CD4-positive, alpha-beta T cell (primary cell): ENCODE measurements at regions of chr3 and their contacts with region 1.

Region 1: GRCh38 chr3:14402304-14402811 is at the start of gene SLC6A6:
- DNase-seq: peak; percentile 88 to 99 (median 95)
- ATAC-seq: peak; percentile 81
- H3K4me3 ChIP-seq: peak within 1 kb of the TSS; percentile 67
- H3K4me3 Mint-ChIP-seq: peak within 1 kb of the TSS; percentile 96
- H3K27ac ChIP-seq: peak within 1 kb of the TSS; percentile 62 to 82
- H3K27ac Mint-ChIP-seq: peak within 1 kb of the TSS; percentile 90
- H3K4me1 ChIP-seq: peaks cover 52% of the 10 kb centered on the region
- H3K4me1 Mint-ChIP-seq: peaks cover 55% of the 10 kb centered on the region
- H3K27me3 ChIP-seq: no peaks in the 10 kb centered on the region
- H3K27me3 Mint-ChIP-seq: no peaks in the 10 kb centered on the region
- CTCF ChIP-seq: peak; percentile 59
- total RNA-seq, gene SLC6A6: 27.8 to 31.2 TPM

Region 2: GRCh38 chr3:13648060-13649001 is 754.0 kb before region 1 on chr3:
- CTCF ChIA-PET with region 1: no interaction called
- POLR2A ChIA-PET with region 1: no interaction called
- intact Hi-C with region 1: loop called in 1 of 2 experiments (anchors 10 kb)
- DNase-seq: peak; percentile 54 to 88 (median 73)
- ATAC-seq: peak; percentile 38
- H3K4me3 ChIP-seq: no peak overlapping the region
- H3K4me3 Mint-ChIP-seq: no peak overlapping the region
- H3K27ac ChIP-seq: no peak overlapping the region
- H3K27ac Mint-ChIP-seq: no peak overlapping the region
- H3K4me1 ChIP-seq: peaks cover 46% of the 10 kb centered on the region
- H3K4me1 Mint-ChIP-seq: peaks cover 51% of the 10 kb centered on the region
- H3K27me3 ChIP-seq: peaks cover 10 to 12% of the 10 kb centered on the region in 2 experiments
- H3K27me3 Mint-ChIP-seq: peaks cover 34% of the 10 kb centered on the region
- CTCF ChIP-seq: peak; percentile 95

Region 3: DNA sequence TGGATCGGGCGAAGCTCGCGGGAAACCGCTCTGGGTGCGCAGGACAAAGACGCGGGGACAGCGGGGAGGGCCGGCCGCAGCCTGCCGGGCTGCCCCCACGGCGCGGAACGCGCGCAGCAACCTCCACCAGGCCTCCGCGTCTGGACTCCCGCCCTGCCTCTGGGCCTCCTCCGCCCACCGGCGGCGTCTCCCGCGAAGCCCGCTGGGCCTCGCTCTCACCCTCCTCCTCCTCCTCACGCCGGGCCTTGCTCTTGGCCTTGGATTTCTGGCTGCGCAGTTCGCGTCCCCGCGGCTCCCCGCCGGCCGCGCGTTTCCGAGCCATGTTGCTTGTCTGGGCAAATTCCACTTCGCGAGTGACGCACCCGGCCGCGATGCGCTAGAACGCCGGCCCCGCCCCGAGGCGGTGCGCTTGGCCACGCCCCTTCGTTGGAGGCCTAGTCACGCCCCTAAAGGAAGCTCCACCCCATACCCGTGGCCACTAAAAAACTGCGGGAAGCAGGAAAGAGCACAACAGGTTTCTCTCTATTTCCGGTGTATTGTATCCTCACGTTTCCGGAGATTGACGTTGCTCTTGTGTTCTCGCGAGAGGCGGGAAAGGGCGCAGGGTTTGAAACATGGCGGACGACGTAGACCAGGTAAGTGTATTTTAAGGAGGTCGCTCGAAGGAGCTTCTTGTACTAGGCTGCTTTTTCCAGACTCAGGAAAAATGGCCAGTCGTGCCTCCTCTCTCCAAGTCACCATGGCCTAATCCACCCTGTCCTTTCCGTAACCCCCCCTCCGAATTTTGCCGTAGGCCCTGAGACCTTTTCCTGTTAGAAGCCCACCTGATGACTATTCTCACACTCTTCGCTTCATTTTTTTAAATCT is 223.9 kb before region 1 on chr3 and contains the starts of genes LSM3 and XPC:
- CTCF ChIA-PET with region 1: no interaction called
- POLR2A ChIA-PET with region 1: interaction called, 7 read pairs
- intact Hi-C with region 1: loop called (anchors 5 kb)
- DNase-seq: peak; percentile 96 to 99 (median 98)
- ATAC-seq: peak; percentile 88
- H3K4me3 ChIP-seq: peak within 1 kb of the TSS; percentile 79
- H3K4me3 Mint-ChIP-seq: peak within 1 kb of the TSS; percentile 98
- H3K27ac ChIP-seq: peak within 1 kb of the TSS; percentile 94 to 97
- H3K27ac Mint-ChIP-seq: peak within 1 kb of the TSS; percentile 93
- H3K4me1 ChIP-seq: peaks cover 43% of the 10 kb centered on the region
- H3K4me1 Mint-ChIP-seq: peaks cover 76% of the 10 kb centered on the region
- H3K27me3 ChIP-seq: no peaks in the 10 kb centered on the region
- H3K27me3 Mint-ChIP-seq: no peaks in the 10 kb centered on the region
- CTCF ChIP-seq: no peak
- total RNA-seq, gene LSM3: 6.5 to 6.9 TPM
- total RNA-seq, gene XPC: 59.2 to 65.1 TPM

Region 4: GRCh38 chr3:14426063-14426620 is 23.8 kb after region 1 on chr3:
- CTCF ChIA-PET with region 1: interaction called, 42 read pairs
- POLR2A ChIA-PET with region 1: interaction called, 107 read pairs
- intact Hi-C with region 1: loop called in 1 of 2 experiments (anchors 1 kb)
- DNase-seq: peak in 13 of 14 experiments; percentile 25 to 88 (median 43)
- ATAC-seq: peak; percentile 60
- H3K4me3 ChIP-seq: peak overlapping the region; percentile 21
- H3K4me3 Mint-ChIP-seq: peak overlapping the region; percentile 52
- H3K27ac ChIP-seq: peak overlapping the region; percentile 55 to 73
- H3K27ac Mint-ChIP-seq: peak overlapping the region; percentile 98
- H3K4me1 ChIP-seq: peaks cover 96% of the 10 kb centered on the region
- H3K4me1 Mint-ChIP-seq: peaks cover 93% of the 10 kb centered on the region
- H3K27me3 ChIP-seq: no peaks in the 10 kb centered on the region
- H3K27me3 Mint-ChIP-seq: no peaks in the 10 kb centered on the region
- CTCF ChIP-seq: peak; percentile 16

Region 5: GRCh38 chr3:14467814-14468620 is 65.7 kb after region 1 on chr3:
- CTCF ChIA-PET with region 1: interaction called, 30 read pairs
- POLR2A ChIA-PET with region 1: interaction called, 8 read pairs
- intact Hi-C with region 1: loop called (anchors 1 kb)
- DNase-seq: peak; percentile 24 to 72 (median 40)
- ATAC-seq: peak; percentile 79
- H3K4me3 ChIP-seq: no peak overlapping the region
- H3K4me3 Mint-ChIP-seq: no peak overlapping the region
- H3K27ac ChIP-seq: no peak overlapping the region
- H3K27ac Mint-ChIP-seq: no peak overlapping the region
- H3K4me1 ChIP-seq: no peaks in the 10 kb centered on the region
- H3K4me1 Mint-ChIP-seq: no peaks in the 10 kb centered on the region
- H3K27me3 ChIP-seq: no peaks in the 10 kb centered on the region
- H3K27me3 Mint-ChIP-seq: no peaks in the 10 kb centered on the region
- CTCF ChIP-seq: peak; percentile 89